ENCODE measurements at regions of chr5 and their contacts with region 1.

Region 1: DNA sequence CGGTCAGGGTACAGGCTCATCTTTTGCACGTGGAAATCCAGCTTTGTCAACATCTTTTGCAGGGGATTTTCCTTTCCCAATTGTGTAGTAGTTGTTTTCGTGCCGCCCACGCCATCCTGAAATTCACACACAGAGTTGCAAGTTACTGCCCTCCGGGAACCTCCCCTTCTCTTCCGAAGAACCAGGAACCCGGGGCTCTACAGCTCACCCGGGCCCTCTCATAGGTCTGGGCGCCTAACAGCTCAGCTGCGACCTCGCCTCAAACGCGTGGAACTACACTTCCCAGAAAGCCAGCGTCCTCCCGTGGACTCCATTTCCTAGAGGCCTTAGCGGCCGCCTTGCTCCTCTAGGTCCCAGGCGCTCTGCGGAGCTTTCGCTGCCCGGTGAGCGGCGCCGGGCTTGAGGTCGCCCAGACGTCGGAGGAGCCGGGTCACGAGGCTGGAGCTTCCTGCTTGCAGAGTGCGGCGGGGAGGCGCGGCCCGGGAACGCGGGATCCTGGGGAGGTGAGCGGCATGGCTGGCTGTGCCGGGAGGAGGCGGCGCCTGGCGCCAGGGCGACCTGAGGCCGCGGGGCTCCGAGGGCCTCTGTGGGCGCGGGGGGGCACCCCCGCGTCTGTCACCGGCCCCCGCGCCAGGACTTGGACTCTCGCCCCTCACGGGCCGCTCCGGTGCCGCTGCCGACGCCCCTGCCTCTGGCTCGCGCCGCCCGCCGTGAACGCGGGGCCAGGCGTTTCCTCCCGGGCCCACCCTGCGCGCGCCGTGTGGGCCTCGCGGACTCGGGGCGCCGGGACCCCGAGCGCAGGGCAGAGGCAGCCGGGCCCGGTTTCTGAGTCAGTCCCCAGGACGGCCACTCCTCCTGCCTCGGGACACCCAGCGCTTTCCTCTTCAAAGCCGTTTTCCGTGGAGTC is at the start of gene ZNF354B:
- DNase-seq: peak; percentile 94 to 95
- ATAC-seq: peak; percentile 95
- H3K4me3 ChIP-seq: peak within 1 kb of the TSS; percentile 42 to 86
- H3K27ac ChIP-seq: peak within 1 kb of the TSS in 1 of 2 donors; percentile 35
- H3K4me1 ChIP-seq: no peaks in the 10 kb centered on the region
- H3K27me3 ChIP-seq: no peaks in the 10 kb centered on the region
- total RNA-seq, gene ZNF354B: 14.4 to 22.9 TPM

Region 2: GRCh38 chr5:178626484-178627258 is 233.2 kb before region 1 on chr5 and contains the start of gene CLK4:
- intact Hi-C with region 1: loop called in 1 of 2 experiments (anchors 2 kb)
- DNase-seq: peak; percentile 98 to 99
- ATAC-seq: peak; percentile 99
- H3K4me3 ChIP-seq: peak within 1 kb of the TSS; percentile 69 to 97
- H3K27ac ChIP-seq: peak within 1 kb of the TSS; percentile 79 to 98
- H3K4me1 ChIP-seq: peaks cover 0 to 7% of the 10 kb centered on the region in 2 donors
- H3K27me3 ChIP-seq: no peaks in the 10 kb centered on the region
- total RNA-seq, gene CLK4: 26.3 to 39.5 TPM